Tibial artery (tissue), 4 donors: ENCODE measurements at regions of chr10 and their contacts with region 1.

Region 1: GRCh38 chr10:11602919-11603523 is 8.4 kb downstream of the USP6NL start:
- DNase-seq: no peak
- H3K4me3 ChIP-seq: no peak overlapping the region
- H3K27ac ChIP-seq: no peak overlapping the region
- H3K4me1 ChIP-seq: no peaks in the 10 kb centered on the region
- H3K27me3 ChIP-seq: no peaks in the 10 kb centered on the region
- CTCF ChIP-seq: no peak

Region 2: GRCh38 chr10:11411926-11412545 is 191.0 kb before region 1 on chr10:
- intact Hi-C with region 1: no loop called
- DNase-seq: no peak
- H3K4me3 ChIP-seq: no peak overlapping the region
- H3K27ac ChIP-seq: no peak overlapping the region
- H3K4me1 ChIP-seq: no peaks in the 10 kb centered on the region
- H3K27me3 ChIP-seq: peaks cover 0 to 3% of the 10 kb centered on the region in 2 donors
- CTCF ChIP-seq: no peak

Region 3: DNA sequence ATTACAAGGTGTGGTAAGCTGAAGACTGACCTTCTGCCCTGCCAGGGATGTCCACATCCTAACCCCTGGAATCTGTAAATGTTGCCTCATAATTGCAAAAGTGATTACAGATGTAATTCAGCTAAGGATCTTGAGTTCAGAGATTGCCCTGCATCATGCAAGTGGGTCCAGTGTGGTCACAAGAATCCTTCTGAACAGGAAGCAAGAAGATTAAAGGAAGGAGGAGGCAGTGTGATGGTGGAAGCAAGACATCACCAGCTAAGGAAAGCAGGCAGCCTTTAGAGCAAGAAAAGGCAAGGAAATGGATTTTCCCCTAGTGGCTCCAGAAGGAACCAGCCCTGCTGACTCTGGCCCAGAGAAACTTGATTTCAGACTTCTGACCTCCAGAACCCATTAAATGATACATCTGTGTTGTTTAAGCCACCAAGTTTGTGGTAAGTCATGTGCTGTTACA is 69.7 kb before region 1 on chr10:
- intact Hi-C with region 1: loop called (anchors 10 kb)
- DNase-seq: no peak
- H3K4me3 ChIP-seq: no peak overlapping the region
- H3K27ac ChIP-seq: no peak overlapping the region
- H3K4me1 ChIP-seq: peaks cover 0 to 3% (median 0%) of the 10 kb centered on the region in 4 donors
- H3K27me3 ChIP-seq: no peaks in the 10 kb centered on the region
- CTCF ChIP-seq: peak; percentile 7 to 11